Posterior cingulate gyrus (tissue), 11 donors: ENCODE measurements at regions of chr9 and their contacts with region 1.

Region 1: GRCh38 chr9:21070171-21070571 is 7.6 kb downstream of the IFNB1 start:
- DNase-seq: peak in 6 of 10 donors; percentile 4 to 87 (median 17)

Region 2: DNA sequence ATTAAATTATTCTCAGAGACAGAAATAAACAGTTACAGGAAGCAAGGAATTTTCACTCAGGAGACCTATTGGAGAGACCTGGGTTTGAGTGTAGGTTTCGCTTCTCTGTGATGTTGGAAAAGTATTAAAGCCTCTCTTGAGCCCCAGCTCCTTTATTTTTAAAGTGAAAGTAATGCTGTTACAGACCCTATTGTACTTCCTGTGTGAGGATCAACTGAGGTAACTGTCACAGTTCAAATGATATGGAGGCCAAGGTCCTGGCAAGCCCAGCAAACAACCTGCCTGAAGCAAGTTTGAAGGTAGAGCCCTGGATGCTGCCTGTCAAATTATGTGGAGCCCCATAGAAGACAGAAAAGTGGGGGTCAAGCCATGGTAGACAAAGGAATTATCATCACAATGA is 30.9 kb before region 1 on chr9:
- intact Hi-C with region 1: no loop called
- DNase-seq: no peak

Region 3: GRCh38 chr9:21135504-21136135 is 65.4 kb after region 1 on chr9:
- intact Hi-C with region 1: loop called (anchors 10 kb)
- DNase-seq: no peak